Transverse colon (tissue), 4 donors: ENCODE measurements at regions of chr4 and their contacts with region 1.

Region 1: GRCh38 chr4:163332500-163333406 is at the start of gene NPY1R:
- DNase-seq: peak; percentile 75
- H3K4me3 ChIP-seq: peak within 1 kb of the TSS; percentile 22 to 57 (median 44)
- H3K27ac ChIP-seq: peak within 1 kb of the TSS in 2 of 4 donors; percentile 31 to 62
- H3K4me1 ChIP-seq: peaks cover 0 to 14% (median 6%) of the 10 kb centered on the region in 4 donors
- H3K27me3 ChIP-seq: peaks cover 46% of the 10 kb centered on the region
- CTCF ChIP-seq: peak; percentile 54 to 77 (median 69)
- EP300 ChIP-seq: no peak
- POLR2A ChIP-seq: no peak
- total RNA-seq, gene NPY1R: 0.80 to 19.8 (median 13.7) TPM

Region 2: DNA sequence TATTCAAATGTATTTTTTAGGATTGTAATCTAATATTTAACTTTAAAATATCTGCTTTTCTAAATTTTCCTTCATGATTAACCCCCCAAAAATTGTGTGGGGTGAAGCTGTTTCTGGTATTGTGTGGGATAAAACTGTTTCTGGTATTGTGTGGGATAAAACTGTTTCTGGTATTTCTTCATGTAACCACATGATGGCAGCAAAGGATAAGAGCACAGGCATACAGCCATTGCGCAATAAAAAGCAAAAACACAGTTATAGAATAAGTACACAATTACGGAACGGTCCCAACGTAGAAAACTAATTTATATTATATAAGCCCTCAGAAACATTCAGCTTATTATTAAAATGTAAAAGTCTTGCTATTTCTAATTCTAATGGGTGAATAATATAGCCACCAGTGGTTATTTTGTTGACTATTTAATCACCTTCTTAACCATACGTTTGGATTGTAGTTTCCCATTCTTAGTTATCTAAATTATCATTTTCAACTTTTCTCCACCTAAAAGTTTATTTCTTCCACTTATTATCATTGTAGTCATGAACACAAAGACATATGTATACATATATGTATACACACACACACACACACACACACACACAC is 835.1 kb before region 1 on chr4:
- in situ Hi-C with region 1: loop called in 1 of 4 experiments (anchors 25 kb)
- intact Hi-C with region 1: loop called (anchors 5 kb)
- DNase-seq: no peak
- H3K4me3 ChIP-seq: no peak overlapping the region
- H3K27ac ChIP-seq: no peak overlapping the region
- H3K4me1 ChIP-seq: no peaks in the 10 kb centered on the region
- H3K27me3 ChIP-seq: no peaks in the 10 kb centered on the region
- CTCF ChIP-seq: peak; percentile 78 to 84 (median 82)
- EP300 ChIP-seq: no peak
- POLR2A ChIP-seq: no peak

Region 3: DNA sequence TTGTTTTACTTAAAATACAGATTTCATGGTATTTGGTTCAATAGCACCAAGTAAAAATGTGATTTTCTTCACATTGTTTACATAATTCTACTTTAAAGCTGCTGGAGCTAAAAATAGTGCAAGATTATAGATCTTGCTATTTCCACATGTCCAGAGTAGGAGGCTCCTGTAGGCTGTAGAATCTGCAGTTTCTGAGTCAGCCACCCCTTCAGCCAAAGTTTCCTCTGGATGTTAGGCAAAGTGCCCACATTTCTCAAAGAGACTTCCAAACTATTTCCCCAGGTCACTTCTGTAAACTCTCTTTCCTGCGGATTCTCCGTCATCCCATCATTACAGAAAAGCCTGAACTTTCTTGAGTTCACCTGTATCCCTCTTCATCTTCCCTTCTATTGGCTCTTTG is 826.5 kb before region 1 on chr4:
- in situ Hi-C with region 1: loop called in 1 of 4 experiments (anchors 25 kb)
- intact Hi-C with region 1: no loop called
- DNase-seq: no peak
- H3K4me3 ChIP-seq: no peak overlapping the region
- H3K27ac ChIP-seq: no peak overlapping the region
- H3K4me1 ChIP-seq: no peaks in the 10 kb centered on the region
- H3K27me3 ChIP-seq: no peaks in the 10 kb centered on the region
- CTCF ChIP-seq: no peak
- EP300 ChIP-seq: no peak
- POLR2A ChIP-seq: no peak

Region 4: GRCh38 chr4:163063891-163064290 is 268.9 kb before region 1 on chr4:
- in situ Hi-C with region 1: no loop called
- intact Hi-C with region 1: no loop called
- DNase-seq: no peak
- H3K4me3 ChIP-seq: no peak overlapping the region
- H3K27ac ChIP-seq: no peak overlapping the region
- H3K4me1 ChIP-seq: no peaks in the 10 kb centered on the region
- H3K27me3 ChIP-seq: no peaks in the 10 kb centered on the region
- CTCF ChIP-seq: no peak
- EP300 ChIP-seq: no peak
- POLR2A ChIP-seq: no peak

Region 5: GRCh38 chr4:163107754-163108153 is 225.0 kb before region 1 on chr4:
- in situ Hi-C with region 1: loop called in 3 of 4 experiments (anchors 10 to 25 kb)
- intact Hi-C with region 1: no loop called
- DNase-seq: no peak
- H3K4me3 ChIP-seq: no peak overlapping the region
- H3K27ac ChIP-seq: no peak overlapping the region
- H3K4me1 ChIP-seq: no peaks in the 10 kb centered on the region
- H3K27me3 ChIP-seq: no peaks in the 10 kb centered on the region
- CTCF ChIP-seq: peak in 3 of 5 experiments; percentile 19 to 27 (median 22)
- EP300 ChIP-seq: no peak
- POLR2A ChIP-seq: no peak